Activated CD4-positive, alpha-beta T cell treated with anti-CD3 and anti-CD28 coated beads for 36 hours (primary cell): ENCODE measurements at regions of chr15 and their contacts with region 1.

Region 1: GRCh38 chr15:40694688-40695468 is at the start of gene RAD51:
- DNase-seq: peak; percentile 96
- ATAC-seq: peak; percentile 93
- H3K4me3 Mint-ChIP-seq: peak within 1 kb of the TSS; percentile 95
- H3K27ac Mint-ChIP-seq: peak within 1 kb of the TSS; percentile 98
- H3K4me1 Mint-ChIP-seq: peaks cover 20% of the 10 kb centered on the region
- H3K27me3 Mint-ChIP-seq: no peaks in the 10 kb centered on the region
- total RNA-seq, gene RAD51: 73.5 to 75.3 TPM

Region 2: GRCh38 chr15:40564591-40565332 is 130.1 kb before region 1 on chr15 and contains the start of gene CCDC32:
- CTCF ChIA-PET with region 1: interaction called, 4 read pairs
- POLR2A ChIA-PET with region 1: interaction called, 5 read pairs
- intact Hi-C with region 1: loop called in 1 of 2 experiments (anchors 1 kb)
- DNase-seq: peak; percentile 97
- ATAC-seq: peak; percentile 97
- H3K4me3 Mint-ChIP-seq: peak within 1 kb of the TSS; percentile 96
- H3K27ac Mint-ChIP-seq: peak within 1 kb of the TSS; percentile 93
- H3K4me1 Mint-ChIP-seq: peaks cover 44% of the 10 kb centered on the region
- H3K27me3 Mint-ChIP-seq: no peaks in the 10 kb centered on the region
- total RNA-seq, gene CCDC32: 14.2 to 24.5 TPM

Region 3: DNA sequence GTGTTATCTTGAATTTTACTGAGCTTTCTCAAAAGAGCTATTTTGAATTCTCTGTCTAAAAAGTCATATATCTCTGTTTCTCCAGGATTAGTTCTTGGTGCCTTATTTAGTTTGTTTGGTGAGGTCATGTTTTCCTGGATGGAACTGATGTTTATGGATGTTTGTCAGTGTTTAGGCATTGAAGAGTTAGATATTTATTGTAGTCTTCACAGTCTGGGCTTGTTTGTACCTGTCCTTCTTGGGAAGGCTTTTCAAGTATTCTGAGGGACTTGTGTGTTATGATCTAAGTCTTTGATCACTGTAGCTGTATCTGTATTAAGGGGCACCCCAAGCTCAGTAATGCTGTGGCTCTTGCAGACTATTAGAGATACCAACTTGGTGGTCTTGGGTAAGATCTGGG is 10.5 kb before region 1 on chr15:
- CTCF ChIA-PET with region 1: interaction called, 18 read pairs
- POLR2A ChIA-PET with region 1: interaction called, 6 read pairs
- intact Hi-C with region 1: loop called (anchors 1 kb)
- DNase-seq: no peak
- ATAC-seq: no peak
- H3K4me3 Mint-ChIP-seq: no peak overlapping the region
- H3K27ac Mint-ChIP-seq: no peak overlapping the region
- H3K4me1 Mint-ChIP-seq: no peaks in the 10 kb centered on the region
- H3K27me3 Mint-ChIP-seq: no peaks in the 10 kb centered on the region

Region 4: DNA sequence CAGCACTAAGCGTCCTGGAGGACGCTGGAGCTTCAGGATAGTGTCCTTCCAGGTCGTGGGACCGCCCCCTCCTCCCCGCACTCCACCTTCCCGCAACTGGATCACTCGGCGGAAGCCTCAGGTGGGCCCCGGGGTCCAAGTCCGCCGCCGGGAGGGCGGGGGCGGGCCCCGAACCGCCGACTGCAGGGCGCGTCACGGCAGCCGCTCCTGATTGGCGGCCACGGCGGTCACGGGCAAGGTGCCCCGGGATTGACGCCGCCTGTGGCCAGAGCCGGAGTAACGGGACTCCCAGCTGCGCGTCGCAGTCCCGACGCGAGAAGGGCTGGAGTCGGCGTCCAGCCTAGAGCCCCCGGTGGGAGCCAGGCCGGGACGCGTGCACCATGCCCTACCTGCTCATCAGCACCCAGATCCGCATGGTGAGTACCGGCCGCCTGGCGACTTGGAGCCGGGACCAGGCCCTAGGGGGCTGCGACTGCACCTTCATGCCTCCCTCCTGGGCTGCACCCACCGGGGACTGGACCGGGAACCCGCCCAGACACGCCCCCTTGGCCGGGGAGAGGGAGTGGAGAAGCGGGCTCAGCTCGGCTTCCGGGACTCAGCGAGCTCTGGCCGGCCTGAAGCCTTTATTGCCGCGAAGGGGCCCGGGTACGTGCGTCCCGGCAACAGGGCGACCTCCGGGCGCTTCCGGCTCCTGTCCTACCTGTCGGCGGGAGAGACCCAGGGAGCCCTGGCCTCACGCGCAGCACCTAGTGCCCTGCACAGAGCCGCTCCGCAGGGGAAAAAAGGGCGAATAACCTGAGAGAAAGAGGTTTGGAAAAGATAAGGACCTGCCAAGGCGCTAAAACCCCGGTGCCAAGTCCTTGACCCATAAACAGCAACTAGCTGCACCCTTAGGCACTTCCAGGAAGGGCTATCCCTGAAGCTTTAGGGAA is 69.2 kb after region 1 on chr15 and contains the start of gene GCHFR:
- CTCF ChIA-PET with region 1: interaction called, 3 read pairs
- POLR2A ChIA-PET with region 1: interaction called, 4 read pairs
- intact Hi-C with region 1: loop called (anchors 2 to 5 kb)
- DNase-seq: peak; percentile 85
- ATAC-seq: peak; percentile 73
- H3K4me3 Mint-ChIP-seq: peak within 1 kb of the TSS; percentile 79
- H3K27ac Mint-ChIP-seq: peak within 1 kb of the TSS; percentile 90
- H3K4me1 Mint-ChIP-seq: peaks cover 35% of the 10 kb centered on the region
- H3K27me3 Mint-ChIP-seq: no peaks in the 10 kb centered on the region
- total RNA-seq, gene GCHFR: 32.8 to 41.1 TPM